Activated CD4-positive, alpha-beta T cell treated with anti-CD3 and anti-CD28 coated beads for 36 hours (primary cell): ENCODE measurements at regions of chr1 and their contacts with region 1.

Region 1: GRCh38 chr1:200890818-200891773 is 3.6 kb upstream of the INAVA start:
- DNase-seq: no peak
- ATAC-seq: no peak
- H3K4me3 Mint-ChIP-seq: peak overlapping the region; percentile 12
- H3K27ac Mint-ChIP-seq: no peak overlapping the region
- H3K4me1 Mint-ChIP-seq: peaks cover 46% of the 10 kb centered on the region
- H3K27me3 Mint-ChIP-seq: peaks cover 35% of the 10 kb centered on the region

Region 2: GRCh38 chr1:200639790-200640669 is 251.1 kb before region 1 on chr1:
- CTCF ChIA-PET with region 1: no interaction called
- POLR2A ChIA-PET with region 1: no interaction called
- intact Hi-C with region 1: no loop called
- DNase-seq: peak; percentile 57
- ATAC-seq: peak; percentile 94
- H3K4me3 Mint-ChIP-seq: no peak overlapping the region
- H3K27ac Mint-ChIP-seq: peak overlapping the region; percentile 20
- H3K4me1 Mint-ChIP-seq: peaks cover 7% of the 10 kb centered on the region
- H3K27me3 Mint-ChIP-seq: no peaks in the 10 kb centered on the region

Region 3: GRCh38 chr1:200866521-200866920 is 24.6 kb before region 1 on chr1:
- CTCF ChIA-PET with region 1: interaction called, 3 read pairs
- POLR2A ChIA-PET with region 1: no interaction called
- intact Hi-C with region 1: loop called (anchors 1 to 2 kb)
- DNase-seq: peak; percentile 75
- ATAC-seq: peak; percentile 84
- H3K4me3 Mint-ChIP-seq: no peak overlapping the region
- H3K27ac Mint-ChIP-seq: no peak overlapping the region
- H3K4me1 Mint-ChIP-seq: peaks cover 48% of the 10 kb centered on the region
- H3K27me3 Mint-ChIP-seq: peaks cover 35% of the 10 kb centered on the region

Region 4: DNA sequence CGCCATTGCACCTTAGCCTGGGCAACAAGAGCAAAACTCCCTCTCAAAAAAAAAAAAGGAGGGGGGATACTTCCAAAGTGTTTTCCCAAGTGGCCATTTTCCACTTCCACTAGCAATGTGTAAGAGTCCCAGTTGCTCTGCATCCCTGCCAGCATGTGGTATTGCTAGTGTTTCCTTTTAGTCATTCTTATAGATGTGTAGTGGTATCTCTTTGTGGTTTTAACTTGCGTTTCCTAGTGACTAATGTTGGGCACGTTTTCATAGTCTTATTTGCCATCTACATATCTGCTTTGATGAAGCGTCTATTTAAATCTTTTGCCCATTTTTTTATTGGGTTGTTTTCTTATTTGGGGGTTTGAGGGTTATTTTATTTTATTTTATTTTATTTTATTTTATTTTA is 34.7 kb after region 1 on chr1:
- CTCF ChIA-PET with region 1: no interaction called
- POLR2A ChIA-PET with region 1: no interaction called
- intact Hi-C with region 1: loop called (anchors 1 kb)
- DNase-seq: peak; percentile 46
- ATAC-seq: peak; percentile 96
- H3K4me3 Mint-ChIP-seq: no peak overlapping the region
- H3K27ac Mint-ChIP-seq: no peak overlapping the region
- H3K4me1 Mint-ChIP-seq: peaks cover 8% of the 10 kb centered on the region
- H3K27me3 Mint-ChIP-seq: peaks cover 24% of the 10 kb centered on the region